Gastrocnemius medialis (tissue), 4 donors: ENCODE measurements at regions of chr18 and their contacts with region 1.

Region 1: GRCh38 chr18:79068937-79069791 is at the start of gene ATP9B:
- DNase-seq: peak; percentile 93 to 96
- ATAC-seq: peak; percentile 94 to 98
- H3K4me3 ChIP-seq: peak within 1 kb of the TSS; percentile 62 to 89 (median 80)
- H3K27ac ChIP-seq: peak within 1 kb of the TSS; percentile 88 to 95 (median 92)
- H3K4me1 ChIP-seq: peaks cover 20% of the 10 kb centered on the region in 2 donors
- H3K27me3 ChIP-seq: no peaks in the 10 kb centered on the region
- CTCF ChIP-seq: peak in 3 of 5 experiments; percentile 23 to 33 (median 23)
- POLR2A ChIP-seq: peak; percentile 59 to 72
- total RNA-seq, gene ATP9B: 9.9 to 33.6 (median 18.6) TPM

Region 2: GRCh38 chr18:78984941-78985784 is 84.0 kb before region 1 on chr18:
- in situ Hi-C with region 1: no loop called
- intact Hi-C with region 1: loop called (anchors 10 kb)
- DNase-seq: no peak
- ATAC-seq: no peak
- H3K4me3 ChIP-seq: peak overlapping the region in 1 of 4 donors; percentile 15
- H3K27ac ChIP-seq: no peak overlapping the region
- H3K4me1 ChIP-seq: peaks cover 0 to 5% of the 10 kb centered on the region in 2 donors
- H3K27me3 ChIP-seq: peaks cover 87 to 96% (median 90%) of the 10 kb centered on the region in 3 donors
- CTCF ChIP-seq: no peak
- POLR2A ChIP-seq: no peak

Region 3: DNA sequence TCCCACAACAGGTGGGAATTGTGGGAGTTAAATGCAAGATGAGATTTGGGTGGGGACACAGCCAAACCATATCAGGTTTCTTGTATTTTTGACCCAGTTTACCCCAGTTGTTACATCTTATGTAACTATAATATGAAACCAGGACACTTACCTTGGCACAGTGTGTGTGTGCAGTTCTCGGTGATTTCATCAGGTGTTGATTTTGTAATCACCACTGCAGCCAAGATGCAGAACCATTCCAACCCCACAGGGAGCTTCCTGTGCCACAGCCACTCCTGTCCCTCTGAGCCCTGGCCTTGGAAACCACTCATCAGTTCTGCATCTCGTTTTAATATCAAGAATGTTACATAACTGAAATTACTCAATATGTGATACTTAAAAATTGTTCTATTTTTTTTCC is 31.8 kb after region 1 on chr18:
- in situ Hi-C with region 1: no loop called
- intact Hi-C with region 1: loop called (anchors 1 kb)
- DNase-seq: peak; percentile 56 to 89
- ATAC-seq: peak; percentile 100
- H3K4me3 ChIP-seq: no peak overlapping the region
- H3K27ac ChIP-seq: peak overlapping the region; percentile 68 to 79 (median 74)
- H3K4me1 ChIP-seq: peaks cover 11 to 22% of the 10 kb centered on the region in 2 donors
- H3K27me3 ChIP-seq: no peaks in the 10 kb centered on the region
- CTCF ChIP-seq: peak in 1 of 5 experiments; percentile 20
- POLR2A ChIP-seq: no peak

Region 4: DNA sequence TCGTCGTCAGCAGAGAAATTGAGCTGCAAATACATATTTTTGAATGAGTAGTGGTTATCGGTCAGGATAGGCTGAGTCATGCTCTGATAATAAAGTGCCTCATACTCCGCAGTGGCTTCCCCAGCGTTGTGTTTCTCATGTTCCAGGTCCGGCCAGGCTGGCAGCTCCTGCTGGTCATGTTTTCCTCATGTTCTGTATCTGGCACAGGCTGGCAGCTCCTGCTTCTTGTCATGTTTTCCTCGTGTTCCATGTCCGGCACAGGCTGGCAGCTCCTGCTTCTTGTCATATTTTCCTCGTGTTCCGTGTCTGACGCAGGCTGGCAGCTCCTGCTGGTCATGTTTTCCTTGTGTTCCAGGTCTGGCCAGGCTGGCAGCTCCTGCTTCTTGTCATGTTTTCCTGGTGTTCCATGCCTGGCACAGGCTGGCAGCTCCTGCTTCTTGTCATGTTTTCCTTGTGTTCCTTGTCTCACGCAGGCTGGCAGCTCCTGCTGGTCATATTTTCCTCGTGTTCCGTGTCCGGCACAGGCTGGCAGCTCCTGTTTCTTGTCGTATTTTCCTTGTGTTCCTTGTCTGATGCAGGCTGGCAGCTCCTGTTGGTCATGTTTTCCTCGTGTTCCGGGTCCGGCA is 148.9 kb after region 1 on chr18:
- in situ Hi-C with region 1: no loop called
- intact Hi-C with region 1: loop called (anchors 1 kb)
- DNase-seq: peak; percentile 79 to 87
- ATAC-seq: peak; percentile 83 to 88
- H3K4me3 ChIP-seq: peak overlapping the region; percentile 44 to 54 (median 46)
- H3K27ac ChIP-seq: peak overlapping the region; percentile 84 to 89 (median 88)
- H3K4me1 ChIP-seq: peaks cover 15 to 20% of the 10 kb centered on the region in 2 donors
- H3K27me3 ChIP-seq: no peaks in the 10 kb centered on the region
- CTCF ChIP-seq: no peak
- POLR2A ChIP-seq: no peak

Region 5: GRCh38 chr18:79393635-79394533 is 324.7 kb after region 1 on chr18:
- in situ Hi-C with region 1: no loop called
- intact Hi-C with region 1: loop called (anchors 2 kb)
- DNase-seq: peak; percentile 57 to 77
- ATAC-seq: peak; percentile 72 to 75
- H3K4me3 ChIP-seq: peak overlapping the region; percentile 65 to 76 (median 68)
- H3K27ac ChIP-seq: peak overlapping the region; percentile 93 to 97 (median 96)
- H3K4me1 ChIP-seq: peaks cover 19 to 22% of the 10 kb centered on the region in 2 donors
- H3K27me3 ChIP-seq: no peaks in the 10 kb centered on the region
- CTCF ChIP-seq: no peak
- POLR2A ChIP-seq: peak; percentile 79 to 94